ENCODE measurements at regions of chr11 and their contacts with region 1.

Region 1: GRCh38 chr11:128630367-128631230 is 43.2 kb upstream of the ETS1 start:
- DNase-seq: peak; percentile 97
- H3K4me3 Mint-ChIP-seq: peak overlapping the region; percentile 60
- H3K27ac Mint-ChIP-seq: peak overlapping the region; percentile 84
- H3K4me1 Mint-ChIP-seq: peaks cover 59% of the 10 kb centered on the region
- H3K27me3 Mint-ChIP-seq: no peaks in the 10 kb centered on the region

Region 2: GRCh38 chr11:128157423-128158298 is 472.9 kb before region 1 on chr11:
- CTCF ChIA-PET with region 1: interaction called, 84 read pairs
- intact Hi-C with region 1: loop called (anchors 1 kb)
- DNase-seq: peak; percentile 74
- H3K4me3 Mint-ChIP-seq: peak overlapping the region; percentile 64
- H3K27ac Mint-ChIP-seq: peak overlapping the region; percentile 82
- H3K4me1 Mint-ChIP-seq: peaks cover 5% of the 10 kb centered on the region
- H3K27me3 Mint-ChIP-seq: no peaks in the 10 kb centered on the region

Region 3: DNA sequence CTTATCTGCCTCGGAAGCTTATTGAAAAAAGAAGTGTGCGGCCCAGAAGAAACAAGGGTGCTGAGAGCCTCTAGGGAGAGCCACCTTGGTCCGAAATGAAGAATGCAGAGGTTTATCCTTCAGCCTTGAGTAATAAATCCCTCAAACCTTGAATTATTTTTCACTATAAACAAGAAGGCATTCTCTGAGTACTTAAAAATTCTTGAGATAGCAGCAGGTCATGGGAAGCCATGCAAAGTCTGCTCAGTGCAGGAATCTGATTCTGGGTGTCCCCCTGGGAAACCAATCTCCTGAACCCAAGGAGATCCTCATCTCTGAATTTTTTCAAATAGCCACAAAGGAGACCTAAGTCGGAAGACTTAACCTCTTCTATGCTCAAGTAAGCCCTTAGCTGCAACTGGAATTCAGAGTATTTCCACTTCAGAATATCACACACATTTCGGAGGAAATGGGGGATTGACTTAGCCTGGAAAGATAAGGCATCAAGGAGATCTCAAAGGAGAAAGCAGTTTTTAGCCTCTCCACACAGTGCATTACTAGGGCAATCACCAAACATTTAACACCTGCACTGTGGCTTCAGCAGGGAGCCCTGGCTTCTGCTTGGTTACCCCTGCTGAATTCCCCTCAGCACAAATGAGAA is 408.2 kb before region 1 on chr11:
- CTCF ChIA-PET with region 1: no interaction called
- intact Hi-C with region 1: no loop called
- DNase-seq: no peak
- H3K4me3 Mint-ChIP-seq: no peak overlapping the region
- H3K27ac Mint-ChIP-seq: no peak overlapping the region
- H3K4me1 Mint-ChIP-seq: peaks cover 18% of the 10 kb centered on the region
- H3K27me3 Mint-ChIP-seq: no peaks in the 10 kb centered on the region

Region 4: GRCh38 chr11:128323381-128323780 is 307.2 kb before region 1 on chr11:
- CTCF ChIA-PET with region 1: interaction called, 21 read pairs
- intact Hi-C with region 1: loop called (anchors 1 kb)
- DNase-seq: peak; percentile 72
- H3K4me3 Mint-ChIP-seq: peak overlapping the region; percentile 32
- H3K27ac Mint-ChIP-seq: peak overlapping the region; percentile 90
- H3K4me1 Mint-ChIP-seq: peaks cover 87% of the 10 kb centered on the region
- H3K27me3 Mint-ChIP-seq: no peaks in the 10 kb centered on the region

Region 5: GRCh38 chr11:128472128-128473089 is 158.2 kb before region 1 on chr11:
- CTCF ChIA-PET with region 1: interaction called, 40 read pairs
- intact Hi-C with region 1: no loop called
- DNase-seq: peak; percentile 86
- H3K4me3 Mint-ChIP-seq: peak overlapping the region; percentile 56
- H3K27ac Mint-ChIP-seq: peak overlapping the region; percentile 97
- H3K4me1 Mint-ChIP-seq: peaks cover 95% of the 10 kb centered on the region
- H3K27me3 Mint-ChIP-seq: no peaks in the 10 kb centered on the region

Region 6: GRCh38 chr11:128552783-128553661 is 77.6 kb before region 1 on chr11:
- CTCF ChIA-PET with region 1: interaction called, 13 read pairs
- intact Hi-C with region 1: loop called (anchors 1 kb)
- DNase-seq: peak; percentile 68
- H3K4me3 Mint-ChIP-seq: peak overlapping the region; percentile 19
- H3K27ac Mint-ChIP-seq: peak overlapping the region; percentile 95
- H3K4me1 Mint-ChIP-seq: peaks cover 59% of the 10 kb centered on the region
- H3K27me3 Mint-ChIP-seq: no peaks in the 10 kb centered on the region

Region 7: DNA sequence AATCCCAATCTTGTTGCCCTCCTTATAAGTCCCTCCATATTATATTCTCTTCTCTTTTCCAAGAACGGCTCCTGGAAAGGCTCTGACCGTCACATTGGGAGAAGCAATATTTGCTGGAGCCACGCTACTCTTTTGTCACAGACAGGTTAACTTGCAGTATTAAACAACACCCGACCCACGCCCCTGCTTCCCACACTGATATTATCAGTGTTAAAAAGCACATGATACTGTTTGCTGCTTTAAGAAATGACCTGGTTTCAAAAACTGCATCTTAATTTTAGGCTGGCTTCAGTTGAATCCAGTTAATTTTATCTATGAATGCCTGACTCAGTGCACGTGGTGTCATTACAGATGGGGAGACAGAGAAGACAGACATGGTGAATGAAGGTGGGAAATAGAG is 66.3 kb after region 1 on chr11:
- CTCF ChIA-PET with region 1: no interaction called
- intact Hi-C with region 1: no loop called
- DNase-seq: no peak
- H3K4me3 Mint-ChIP-seq: peak overlapping the region; percentile 90
- H3K27ac Mint-ChIP-seq: peak overlapping the region; percentile 10
- H3K4me1 Mint-ChIP-seq: peaks cover 61% of the 10 kb centered on the region
- H3K27me3 Mint-ChIP-seq: peaks cover under 1% of the 10 kb centered on the region

Region 8: DNA sequence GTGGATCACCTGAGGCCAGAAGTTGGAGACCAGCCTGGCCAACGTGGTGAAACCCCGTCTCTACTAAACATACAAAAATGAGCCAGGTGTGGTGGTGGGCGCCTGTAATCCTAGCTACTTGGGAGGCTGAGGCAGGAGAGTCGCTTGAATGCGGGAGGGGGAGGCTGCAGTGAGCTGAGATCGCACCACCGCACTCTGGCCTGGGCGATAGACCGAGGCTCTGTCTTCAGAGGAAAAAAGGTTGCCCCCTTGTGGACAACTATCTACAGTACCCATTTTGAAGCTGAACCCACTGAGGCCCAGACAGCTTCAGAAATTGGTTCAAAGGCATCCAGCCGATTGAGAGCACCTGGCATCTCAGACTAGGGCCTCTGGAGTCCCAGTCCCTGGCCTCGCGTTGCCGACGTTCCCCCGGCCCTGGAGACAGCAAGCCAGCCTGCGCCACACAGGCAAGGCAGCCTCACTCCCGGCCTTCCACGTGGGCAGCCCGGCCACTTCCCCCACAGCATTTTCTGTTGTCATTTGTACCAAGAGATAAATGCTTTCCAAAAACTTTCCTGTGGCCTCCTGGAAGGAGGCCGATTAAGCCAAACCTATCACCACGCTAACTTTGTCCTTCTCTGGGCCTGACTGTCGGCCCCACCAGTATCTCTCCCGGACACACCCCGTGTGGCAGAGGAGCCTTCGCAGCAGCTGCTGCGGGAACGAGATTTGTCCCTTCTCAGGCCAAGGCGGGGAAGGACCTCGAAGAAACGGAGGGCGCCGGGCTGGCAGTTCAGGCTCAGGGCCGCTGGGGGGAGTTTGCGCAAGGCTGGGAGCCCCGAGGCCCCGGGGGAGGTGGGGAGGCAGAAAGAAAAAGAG is 146.1 kb after region 1 on chr11:
- CTCF ChIA-PET with region 1: interaction called, 11 read pairs
- intact Hi-C with region 1: no loop called
- DNase-seq: peak; percentile 35
- H3K4me3 Mint-ChIP-seq: no peak overlapping the region
- H3K27ac Mint-ChIP-seq: no peak overlapping the region
- H3K4me1 Mint-ChIP-seq: peaks cover 44% of the 10 kb centered on the region
- H3K27me3 Mint-ChIP-seq: no peaks in the 10 kb centered on the region

Measured in activated naive CD4-positive, alpha-beta T cell treated with anti-CD3 and anti-CD28 coated beads for 36 hours (primary cell).